Lower lobe of right lung (tissue), 2 donors: ENCODE measurements at regions of chr3 and their contacts with region 1.

Region 1: GRCh38 chr3:177050501-177051237 is 146.6 kb downstream of the TBL1XR1 start:
- DNase-seq: no peak
- ATAC-seq: peak in 1 of 2 donors; percentile 75
- H3K4me3 ChIP-seq: no peak overlapping the region
- H3K27ac ChIP-seq: no peak overlapping the region
- H3K4me1 ChIP-seq: peaks cover 14% of the 10 kb centered on the region
- H3K27me3 ChIP-seq: no peaks in the 10 kb centered on the region
- CTCF ChIP-seq: peak; percentile 55

Region 2: DNA sequence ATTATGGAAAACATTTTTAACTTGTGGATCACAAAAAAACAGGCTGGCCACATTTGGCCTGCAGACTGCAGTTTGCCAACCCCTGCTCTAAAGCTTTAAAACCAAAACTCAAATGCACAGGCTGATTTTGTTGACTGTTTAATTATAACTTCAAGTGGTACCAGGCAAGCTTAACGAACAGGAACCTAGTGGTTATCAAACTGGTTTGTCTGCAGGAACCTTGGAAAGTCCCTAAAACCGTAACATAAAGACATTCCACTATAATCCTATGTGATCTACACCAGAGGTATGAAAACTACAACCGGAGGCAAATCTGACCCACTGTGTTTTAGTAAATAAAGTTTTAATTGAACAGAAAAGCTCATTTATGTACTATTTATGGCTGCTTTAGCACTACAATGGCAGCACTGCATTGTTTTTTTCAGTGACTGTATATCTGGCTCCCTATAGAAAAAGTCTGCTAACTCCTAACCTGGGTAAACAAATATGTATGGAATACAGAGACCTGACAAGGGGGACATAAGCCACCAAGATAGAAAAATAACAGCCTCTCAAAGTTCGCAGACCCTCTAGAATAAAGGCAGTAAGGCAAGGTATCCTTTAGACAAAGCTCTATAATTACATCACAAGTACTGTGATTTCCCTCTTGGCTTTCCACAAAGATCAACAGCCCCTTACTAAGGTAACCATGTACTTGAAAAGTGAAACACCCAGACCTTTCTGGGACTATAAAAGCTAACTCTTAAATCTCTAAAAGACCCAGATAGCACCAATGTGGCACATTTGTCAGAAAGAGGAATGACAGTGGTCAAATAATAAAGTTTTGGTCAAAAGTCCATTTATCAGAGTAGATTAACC is 94.5 kb after region 1 on chr3:
- intact Hi-C with region 1: no loop called
- DNase-seq: no peak
- ATAC-seq: peak; percentile 58 to 71
- H3K4me3 ChIP-seq: no peak overlapping the region
- H3K27ac ChIP-seq: no peak overlapping the region
- H3K4me1 ChIP-seq: peaks cover 50% of the 10 kb centered on the region
- H3K27me3 ChIP-seq: no peaks in the 10 kb centered on the region
- CTCF ChIP-seq: no peak

Region 3: GRCh38 chr3:177197041-177197727 is 146.5 kb after region 1 on chr3 and contains the start of gene TBL1XR1:
- intact Hi-C with region 1: loop called (anchors 10 kb)
- DNase-seq: peak; percentile 92
- ATAC-seq: peak; percentile 85 to 91
- H3K4me3 ChIP-seq: peak within 1 kb of the TSS; percentile 74
- H3K27ac ChIP-seq: peak within 1 kb of the TSS; percentile 94
- H3K4me1 ChIP-seq: peaks cover 35% of the 10 kb centered on the region
- H3K27me3 ChIP-seq: no peaks in the 10 kb centered on the region
- CTCF ChIP-seq: no peak
- total RNA-seq, gene TBL1XR1: 160 TPM

Region 4: GRCh38 chr3:177211503-177212277 is 161.0 kb after region 1 on chr3:
- intact Hi-C with region 1: no loop called
- DNase-seq: no peak
- ATAC-seq: peak; percentile 48 to 73
- H3K4me3 ChIP-seq: no peak overlapping the region
- H3K27ac ChIP-seq: no peak overlapping the region
- H3K4me1 ChIP-seq: no peaks in the 10 kb centered on the region
- H3K27me3 ChIP-seq: no peaks in the 10 kb centered on the region
- CTCF ChIP-seq: no peak